Breast epithelium (tissue), 4 donors: ENCODE measurements at regions of chr18 and their contacts with region 1.

Region 1: DNA sequence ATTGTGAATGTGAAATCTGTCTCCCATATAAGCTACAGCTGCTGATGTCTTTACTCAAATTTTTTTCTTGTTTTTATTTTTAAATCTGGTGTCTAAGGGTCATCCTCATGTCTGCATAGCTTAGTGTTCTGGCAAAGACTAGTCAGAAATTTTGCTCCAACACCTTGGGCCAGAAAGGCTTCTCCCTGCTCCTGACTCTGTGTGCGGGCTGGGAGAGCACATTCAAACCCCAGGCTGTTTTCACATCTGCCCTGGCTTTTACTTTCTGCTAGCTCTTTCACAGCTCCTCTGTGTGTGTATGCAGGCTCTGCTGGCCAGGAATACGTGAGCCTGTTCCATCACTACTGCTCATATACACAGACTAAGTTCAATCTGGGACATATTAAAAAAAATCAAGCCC is 102.9 kb upstream of the RIOK3 start:
- DNase-seq: no peak
- H3K4me3 ChIP-seq: no peak overlapping the region
- H3K27ac ChIP-seq: no peak overlapping the region
- H3K4me1 ChIP-seq: no peaks in the 10 kb centered on the region
- H3K27me3 ChIP-seq: no peaks in the 10 kb centered on the region
- CTCF ChIP-seq: no peak
- POLR2A ChIP-seq: no peak

Region 2: GRCh38 chr18:22627526-22627925 is 722.7 kb before region 1 on chr18:
- intact Hi-C with region 1: no loop called
- DNase-seq: no peak
- H3K4me3 ChIP-seq: no peak overlapping the region
- H3K27ac ChIP-seq: no peak overlapping the region
- H3K4me1 ChIP-seq: no peaks in the 10 kb centered on the region
- H3K27me3 ChIP-seq: no peaks in the 10 kb centered on the region
- CTCF ChIP-seq: no peak
- POLR2A ChIP-seq: no peak

Region 3: GRCh38 chr18:23337599-23338444 is 12.4 kb before region 1 on chr18:
- intact Hi-C with region 1: no loop called
- DNase-seq: no peak
- H3K4me3 ChIP-seq: no peak overlapping the region
- H3K27ac ChIP-seq: no peak overlapping the region
- H3K4me1 ChIP-seq: no peaks in the 10 kb centered on the region
- H3K27me3 ChIP-seq: no peaks in the 10 kb centered on the region
- CTCF ChIP-seq: no peak
- POLR2A ChIP-seq: no peak

Region 4: GRCh38 chr18:23377669-23378301 is 27.6 kb after region 1 on chr18:
- intact Hi-C with region 1: loop called (anchors 1 kb)
- DNase-seq: no peak
- H3K4me3 ChIP-seq: no peak overlapping the region
- H3K27ac ChIP-seq: peak overlapping the region; percentile 63 to 65
- H3K4me1 ChIP-seq: peaks cover 0 to 7% of the 10 kb centered on the region in 2 donors
- H3K27me3 ChIP-seq: no peaks in the 10 kb centered on the region
- CTCF ChIP-seq: no peak
- POLR2A ChIP-seq: no peak

Region 5: DNA sequence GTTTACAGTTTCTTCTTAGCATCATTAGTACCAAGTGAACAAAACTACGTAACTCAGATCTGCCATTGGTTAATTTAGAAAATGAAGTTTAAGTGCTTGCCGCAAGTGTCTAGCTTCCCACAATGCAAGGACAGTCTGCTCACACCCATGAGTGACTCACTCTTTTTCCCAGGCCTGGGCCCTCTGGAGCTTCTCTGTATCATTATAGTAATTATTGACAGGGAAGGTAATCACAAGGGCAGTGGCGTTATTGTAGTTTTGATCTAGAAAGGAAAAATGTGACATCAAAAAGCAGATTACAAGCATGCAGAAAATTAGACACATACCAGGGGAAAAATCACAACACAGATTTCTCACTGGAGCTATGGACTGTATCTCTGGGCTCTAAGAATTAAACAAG is 197.7 kb after region 1 on chr18:
- intact Hi-C with region 1: no loop called
- DNase-seq: no peak
- H3K4me3 ChIP-seq: no peak overlapping the region
- H3K27ac ChIP-seq: no peak overlapping the region
- H3K4me1 ChIP-seq: no peaks in the 10 kb centered on the region
- H3K27me3 ChIP-seq: no peaks in the 10 kb centered on the region
- CTCF ChIP-seq: no peak
- POLR2A ChIP-seq: no peak